ENCODE measurements at regions of chr15 and their contacts with region 1.

Region 1: GRCh38 chr15:79380755-79381497 is 51.2 kb upstream of the MINAR1 start:
- DNase-seq: no peak

Region 2: GRCh38 chr15:79349525-79349924 is 31.4 kb before region 1 on chr15:
- intact Hi-C with region 1: no loop called
- DNase-seq: no peak

Region 3: GRCh38 chr15:79364571-79365240 is 16.2 kb before region 1 on chr15:
- intact Hi-C with region 1: no loop called
- DNase-seq: no peak

Region 4: GRCh38 chr15:79418693-79419279 is 37.9 kb after region 1 on chr15:
- intact Hi-C with region 1: no loop called
- DNase-seq: no peak

Region 5: GRCh38 chr15:79596051-79596507 is 215.2 kb after region 1 on chr15:
- intact Hi-C with region 1: loop called (anchors 2 kb)
- DNase-seq: no peak

Region 6: GRCh38 chr15:79853458-79854328 is 472.8 kb after region 1 on chr15:
- intact Hi-C with region 1: loop called (anchors 5 kb)
- DNase-seq: no peak

Region 7: GRCh38 chr15:79989682-79990081 is 608.8 kb after region 1 on chr15:
- intact Hi-C with region 1: loop called (anchors 5 kb)
- DNase-seq: no peak